GM12878 (cell line): ENCODE measurements at regions of chr2 and their contacts with region 1.

Region 1: GRCh38 chr2:44560352-44560751 is 198.6 kb downstream of the CAMKMT start:
- DNase-seq: no peak
- ATAC-seq: peak; percentile 57
- H3K4me3 ChIP-seq: no peak overlapping the region
- H3K27ac ChIP-seq: no peak overlapping the region
- H3K4me1 ChIP-seq: no peaks in the 10 kb centered on the region
- H3K27me3 ChIP-seq: no peaks in the 10 kb centered on the region
- CTCF ChIP-seq: peak; percentile 29 to 40 (median 36); a peak in 5 of 6 replicates
- EP300 ChIP-seq: no peak
- POLR2A ChIP-seq: no peak
- RAD21 ChIP-seq: peak; percentile 48

Region 2: DNA sequence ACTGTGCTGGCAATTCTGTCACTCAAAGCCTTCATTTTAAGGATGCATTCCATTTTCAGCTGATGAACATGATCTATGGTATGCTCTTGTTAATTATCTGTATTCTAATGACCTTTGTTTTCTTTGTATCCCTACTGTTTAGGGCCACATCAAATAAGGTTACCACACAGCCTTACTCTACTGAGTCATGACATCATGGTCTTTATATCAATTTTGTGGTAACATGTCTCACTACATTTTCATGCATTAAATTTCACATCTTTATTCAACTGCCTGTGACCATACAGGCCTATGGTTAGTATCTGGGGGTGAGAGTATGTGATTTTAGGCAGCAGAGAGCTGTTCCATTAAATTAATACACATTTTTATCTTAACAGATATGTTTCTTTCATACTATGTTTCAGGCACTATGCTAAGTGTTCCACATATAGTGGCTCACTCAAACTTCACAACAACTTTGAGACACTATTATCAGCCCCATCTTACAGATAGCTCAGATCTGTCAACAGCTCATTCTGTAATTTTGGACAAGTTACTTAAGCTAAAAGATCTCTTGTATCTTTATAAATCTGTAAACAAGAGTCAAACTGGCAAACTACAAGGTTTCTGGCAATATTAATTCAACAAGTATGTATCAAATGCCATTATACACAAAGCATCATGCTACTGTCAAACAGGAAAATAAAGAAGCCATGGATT is 582.5 kb before region 1 on chr2:
- CTCF ChIA-PET with region 1: no interaction called
- POLR2A ChIA-PET with region 1: no interaction called
- RAD21 ChIA-PET with region 1: no interaction called
- SMC1A ChIA-PET with region 1: no interaction called
- in situ Hi-C with region 1: no loop called
- intact Hi-C with region 1: no loop called
- DNase-seq: no peak
- ATAC-seq: no peak
- H3K4me3 ChIP-seq: no peak overlapping the region
- H3K27ac ChIP-seq: no peak overlapping the region
- H3K4me1 ChIP-seq: no peaks in the 10 kb centered on the region
- H3K27me3 ChIP-seq: no peaks in the 10 kb centered on the region
- CTCF ChIP-seq: no peak
- EP300 ChIP-seq: no peak
- POLR2A ChIP-seq: no peak
- RAD21 ChIP-seq: no peak

Region 3: GRCh38 chr2:44549095-44549463 is 11.3 kb before region 1 on chr2:
- CTCF ChIA-PET with region 1: interaction called, 17 read pairs
- POLR2A ChIA-PET with region 1: no interaction called
- RAD21 ChIA-PET with region 1: interaction called, 3 read pairs
- SMC1A ChIA-PET with region 1: interaction called, 24 read pairs
- in situ Hi-C with region 1: no loop called
- intact Hi-C with region 1: no loop called
- DNase-seq: no peak
- ATAC-seq: no peak
- H3K4me3 ChIP-seq: no peak overlapping the region
- H3K27ac ChIP-seq: no peak overlapping the region
- H3K4me1 ChIP-seq: peaks cover 5% of the 10 kb centered on the region
- H3K27me3 ChIP-seq: no peaks in the 10 kb centered on the region
- CTCF ChIP-seq: no peak
- EP300 ChIP-seq: no peak
- POLR2A ChIP-seq: no peak
- RAD21 ChIP-seq: no peak

Region 4: DNA sequence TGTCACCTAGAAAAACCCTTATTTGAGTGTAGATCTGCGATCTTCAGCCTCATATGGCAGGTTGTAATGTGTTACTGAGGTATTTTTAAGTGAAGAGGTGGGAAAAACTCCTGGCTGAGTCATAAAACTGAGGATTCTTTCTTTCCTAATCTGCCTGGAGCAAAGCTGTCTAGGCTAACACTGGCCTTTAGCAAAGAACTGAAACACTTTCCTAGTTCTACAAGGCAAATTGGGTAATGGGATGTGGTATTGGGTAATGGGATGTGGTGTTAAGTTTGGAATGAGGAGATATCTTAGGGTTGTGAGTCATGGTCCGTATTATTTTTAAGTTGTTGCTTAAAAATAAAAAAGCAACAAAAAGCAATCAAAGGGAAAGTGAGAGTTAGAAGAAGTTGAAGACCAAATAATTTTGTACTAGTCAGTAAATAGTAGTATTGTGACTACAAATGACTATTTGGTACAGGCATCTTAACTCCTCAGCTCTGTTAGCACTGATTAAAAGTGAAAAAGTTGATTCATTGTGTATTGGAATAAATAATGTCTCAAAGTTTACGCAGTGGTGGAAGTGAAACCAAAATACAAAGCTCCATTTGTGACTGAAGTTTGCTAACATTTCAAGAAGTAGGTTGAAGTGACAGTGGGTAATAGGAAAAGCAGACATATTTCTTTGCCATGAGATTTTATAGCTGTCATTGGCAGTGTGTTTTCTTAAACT is 18.2 kb after region 1 on chr2:
- CTCF ChIA-PET with region 1: interaction called, 30 read pairs
- POLR2A ChIA-PET with region 1: no interaction called
- RAD21 ChIA-PET with region 1: interaction called, 8 read pairs
- SMC1A ChIA-PET with region 1: interaction called, 46 read pairs
- in situ Hi-C with region 1: no loop called
- intact Hi-C with region 1: no loop called
- DNase-seq: peak; percentile 54
- ATAC-seq: peak; percentile 95
- H3K4me3 ChIP-seq: 0 out of 2 replicates have a peak overlapping the region, but pooled peaks have one; percentile 9
- H3K27ac ChIP-seq: peak overlapping the region; percentile 63
- H3K4me1 ChIP-seq: peaks cover 11% of the 10 kb centered on the region; the same call in 1 of the 2 replicates
- H3K27me3 ChIP-seq: no peaks in the 10 kb centered on the region
- CTCF ChIP-seq: no peak
- EP300 ChIP-seq: peak; percentile 49 to 56; a peak in 1 of 4 replicates
- POLR2A ChIP-seq: no peak
- RAD21 ChIP-seq: no peak

Region 5: DNA sequence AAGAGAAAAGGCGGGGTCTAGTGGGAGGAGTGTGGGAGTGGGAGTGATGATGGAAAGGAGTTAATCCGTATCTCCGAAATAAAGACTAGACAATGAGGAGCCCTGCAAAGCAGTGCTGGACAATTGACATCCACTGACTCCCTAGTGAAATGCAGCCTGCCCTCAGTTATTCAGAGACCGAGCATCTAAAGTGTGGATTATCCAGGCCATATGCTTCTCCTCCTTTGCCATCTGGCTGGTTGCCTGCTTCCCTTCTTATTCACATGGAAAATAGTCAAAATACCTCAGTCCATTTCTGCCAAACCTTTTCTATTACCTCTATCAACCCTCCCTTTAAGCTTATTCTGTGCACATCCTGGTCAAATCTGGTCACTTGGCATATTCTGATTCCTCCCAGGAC is 92.3 kb after region 1 on chr2:
- CTCF ChIA-PET with region 1: interaction called, 13 read pairs
- POLR2A ChIA-PET with region 1: no interaction called
- RAD21 ChIA-PET with region 1: no interaction called
- SMC1A ChIA-PET with region 1: interaction called, 3 read pairs
- in situ Hi-C with region 1: no loop called
- intact Hi-C with region 1: no loop called
- DNase-seq: no peak
- ATAC-seq: no peak
- H3K4me3 ChIP-seq: no peak overlapping the region
- H3K27ac ChIP-seq: no peak overlapping the region
- H3K4me1 ChIP-seq: peaks cover 9% of the 10 kb centered on the region
- H3K27me3 ChIP-seq: no peaks in the 10 kb centered on the region
- CTCF ChIP-seq: no peak
- EP300 ChIP-seq: no peak
- POLR2A ChIP-seq: no peak
- RAD21 ChIP-seq: no peak

Region 6: DNA sequence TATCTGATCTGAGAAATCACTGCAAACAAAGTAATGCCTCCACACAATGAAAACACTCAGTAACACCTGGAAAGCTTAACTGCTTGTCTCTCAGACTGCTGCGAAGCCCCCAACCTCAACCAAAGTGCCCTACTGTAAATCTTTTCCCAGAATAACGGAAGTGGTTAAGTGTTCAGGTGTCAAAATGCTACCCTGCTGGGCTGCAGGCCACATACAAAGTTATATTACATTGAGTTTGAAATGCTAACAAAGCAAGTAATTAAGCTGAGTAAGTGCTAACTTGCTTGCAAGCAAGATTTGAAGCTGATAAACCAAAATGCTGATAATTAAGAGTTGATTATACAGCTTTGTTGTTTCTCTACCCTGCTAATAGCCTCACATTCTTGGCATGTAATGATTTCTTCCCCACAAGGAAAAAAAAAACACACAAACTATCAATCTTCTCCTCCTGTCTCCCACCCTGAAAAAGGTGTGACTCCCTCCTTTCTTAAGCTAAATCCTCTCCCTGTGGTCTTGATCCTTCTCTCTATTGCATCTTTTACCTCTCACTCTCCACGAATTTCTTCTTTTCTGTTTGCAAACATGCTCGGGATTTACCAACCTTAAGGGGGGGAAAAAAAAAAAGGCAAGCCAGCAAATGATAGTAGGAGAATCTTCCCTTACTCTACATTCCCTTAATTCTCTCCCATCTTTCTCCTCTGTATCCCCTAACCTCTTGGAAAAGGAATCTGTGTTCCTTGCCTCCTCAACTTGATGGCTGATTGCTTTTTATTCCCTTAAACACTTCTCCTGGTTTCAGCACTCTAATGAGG is 114.3 kb after region 1 on chr2:
- CTCF ChIA-PET with region 1: interaction called, 9 read pairs
- POLR2A ChIA-PET with region 1: no interaction called
- RAD21 ChIA-PET with region 1: interaction called, 6 read pairs
- SMC1A ChIA-PET with region 1: interaction called, 19 read pairs
- in situ Hi-C with region 1: no loop called
- intact Hi-C with region 1: loop called (anchors 2 kb)
- DNase-seq: no peak
- ATAC-seq: peak; percentile 46; the same call in 2 of the 3 replicates
- H3K4me3 ChIP-seq: no peak overlapping the region
- H3K27ac ChIP-seq: no peak overlapping the region
- H3K4me1 ChIP-seq: no peaks in the 10 kb centered on the region
- H3K27me3 ChIP-seq: no peaks in the 10 kb centered on the region
- CTCF ChIP-seq: no peak
- EP300 ChIP-seq: no peak
- POLR2A ChIP-seq: no peak
- RAD21 ChIP-seq: no peak

Region 7: DNA sequence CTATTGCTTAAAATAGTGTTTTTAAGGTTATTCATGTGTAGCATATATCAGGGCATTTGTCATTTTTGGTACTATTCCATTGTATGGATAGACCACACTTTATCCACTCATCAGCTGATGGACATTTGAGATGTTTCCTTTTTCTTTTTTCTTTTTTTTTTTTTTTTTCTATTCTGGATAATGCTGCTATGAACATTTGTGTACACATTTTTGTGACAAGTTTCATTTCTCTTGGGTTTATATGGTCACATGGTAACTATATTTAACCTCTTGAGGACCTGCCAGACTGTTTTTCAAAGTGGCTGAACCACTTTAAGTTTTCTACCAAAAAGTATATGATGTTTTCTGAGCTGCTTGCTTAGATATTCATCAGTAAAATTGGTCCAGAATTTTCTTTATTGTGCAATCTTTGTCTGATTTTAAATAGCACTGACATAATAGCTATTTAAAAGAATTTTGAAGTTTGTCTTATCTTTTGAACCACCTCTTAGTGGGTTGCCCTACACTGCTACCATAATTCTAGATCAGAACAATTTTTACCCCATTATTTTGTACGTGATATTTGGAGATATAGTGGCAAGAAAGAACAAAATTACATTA is 161.8 kb after region 1 on chr2:
- CTCF ChIA-PET with region 1: interaction called, 36 read pairs
- POLR2A ChIA-PET with region 1: interaction called, 3 read pairs
- RAD21 ChIA-PET with region 1: interaction called, 4 read pairs
- SMC1A ChIA-PET with region 1: interaction called, 27 read pairs
- in situ Hi-C with region 1: no loop called
- intact Hi-C with region 1: no loop called
- DNase-seq: peak; percentile 13
- ATAC-seq: peak; percentile 82
- H3K4me3 ChIP-seq: no peak overlapping the region
- H3K27ac ChIP-seq: peak overlapping the region; percentile 37; the same call in 1 of the 2 replicates
- H3K4me1 ChIP-seq: peaks cover 19% of the 10 kb centered on the region
- H3K27me3 ChIP-seq: no peaks in the 10 kb centered on the region
- CTCF ChIP-seq: no peak
- EP300 ChIP-seq: no peak
- POLR2A ChIP-seq: no peak
- RAD21 ChIP-seq: no peak